ENCODE measurements at regions of chr22 and their contacts with region 1.

Region 1: GRCh38 chr22:20116951-20117645 is at the start of gene TRMT2A:
- DNase-seq: peak; percentile 98
- CTCF ChIP-seq: peak; percentile 4

Region 2: GRCh38 chr22:20093418-20094196 is 23.5 kb before region 1 on chr22:
- CTCF ChIA-PET with region 1: no interaction called
- POLR2A ChIA-PET with region 1: no interaction called
- DNase-seq: no peak
- CTCF ChIP-seq: no peak

Region 3: GRCh38 chr22:20128902-20129746 is 12.0 kb after region 1 on chr22:
- CTCF ChIA-PET with region 1: interaction called, 10 read pairs
- POLR2A ChIA-PET with region 1: interaction called, 3 read pairs
- DNase-seq: no peak
- CTCF ChIP-seq: peak; percentile 43